Activated T-helper 1 cell treated with anti-CD3 and anti-CD28 coated beads, Interleukin-12 subunit alpha, Interleukin-12 subunit beta, Interleukin-2, Interleukin-4 antibody, amounts not matched to agents 30 ng/mL and 10 ng/mL and 1 ng/mL, durations not matched to agents 14 hours and 24 hours and 36 hours (primary cell): ENCODE measurements at regions of chr6 and their contacts with region 1.

Region 1: DNA sequence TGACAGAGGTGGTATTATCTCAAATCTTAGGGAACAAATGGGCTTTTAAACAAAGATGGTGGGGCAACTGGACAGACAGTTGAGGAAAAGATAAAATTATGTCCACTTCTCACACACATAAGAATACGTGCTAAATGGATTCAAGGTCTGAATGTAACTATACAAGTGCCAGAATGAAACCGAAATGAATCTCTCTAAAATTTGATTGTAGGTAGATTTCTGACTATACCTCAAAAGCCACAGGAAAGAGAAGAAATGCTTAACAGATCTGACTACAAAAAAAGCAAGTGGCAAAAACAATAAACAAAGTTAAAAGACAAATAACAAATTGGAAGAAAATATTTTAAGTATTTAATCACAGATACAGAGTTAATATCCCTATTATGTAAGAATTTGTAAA is 182.7 kb upstream of the OLIG3 start:
- DNase-seq: no peak
- H3K4me3 Mint-ChIP-seq: peak overlapping the region; percentile 20
- H3K27ac Mint-ChIP-seq: peak overlapping the region; percentile 88
- H3K4me1 Mint-ChIP-seq: peaks cover 63% of the 10 kb centered on the region
- H3K27me3 Mint-ChIP-seq: peaks cover 3% of the 10 kb centered on the region

Region 2: DNA sequence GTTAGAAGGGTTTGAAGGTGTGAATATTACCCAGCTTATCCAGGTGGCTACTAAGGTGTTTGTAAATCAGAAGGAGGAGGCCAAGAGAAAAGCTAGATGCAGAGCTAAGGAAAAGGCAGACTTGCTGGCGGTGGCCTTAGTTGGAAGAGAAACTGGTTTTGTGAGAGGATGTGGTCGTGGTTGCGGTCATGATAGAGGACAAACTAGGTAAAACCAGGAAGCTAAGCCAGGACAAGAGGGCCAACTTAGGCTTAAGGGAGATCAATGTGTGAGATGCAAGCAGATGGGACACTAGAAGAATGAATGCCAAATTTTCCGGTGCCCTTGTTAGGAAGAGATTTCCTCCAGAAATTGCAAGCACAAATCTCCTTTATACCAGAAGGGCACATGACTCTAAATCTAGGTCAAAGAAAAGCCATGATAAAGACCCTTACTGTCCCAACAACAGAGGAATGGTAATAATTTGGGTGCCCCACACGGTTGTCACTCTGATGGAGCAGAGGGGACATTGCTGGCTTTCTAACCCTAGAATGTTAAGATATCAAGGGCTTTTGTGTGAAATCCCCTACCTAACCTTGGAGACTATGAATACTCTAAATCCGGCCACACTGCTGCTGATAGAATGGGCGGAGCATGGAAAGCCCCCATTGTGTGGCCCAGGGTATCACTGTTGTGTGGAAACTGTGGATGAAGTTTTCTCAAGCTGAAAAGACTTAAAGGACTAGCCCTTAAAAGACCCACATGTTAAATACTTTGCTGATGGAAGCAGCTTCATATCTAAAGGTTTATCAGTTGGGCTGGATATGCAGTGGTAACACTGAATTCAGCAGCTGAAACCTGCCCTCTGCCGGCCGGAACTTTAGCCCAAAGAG is 511.3 kb before region 1 on chr6:
- intact Hi-C with region 1: loop called (anchors 1 kb)
- DNase-seq: peak; percentile 59
- H3K4me3 Mint-ChIP-seq: peak overlapping the region; percentile 30
- H3K27ac Mint-ChIP-seq: peak overlapping the region; percentile 64
- H3K4me1 Mint-ChIP-seq: peaks cover 59% of the 10 kb centered on the region
- H3K27me3 Mint-ChIP-seq: no peaks in the 10 kb centered on the region

Region 3: DNA sequence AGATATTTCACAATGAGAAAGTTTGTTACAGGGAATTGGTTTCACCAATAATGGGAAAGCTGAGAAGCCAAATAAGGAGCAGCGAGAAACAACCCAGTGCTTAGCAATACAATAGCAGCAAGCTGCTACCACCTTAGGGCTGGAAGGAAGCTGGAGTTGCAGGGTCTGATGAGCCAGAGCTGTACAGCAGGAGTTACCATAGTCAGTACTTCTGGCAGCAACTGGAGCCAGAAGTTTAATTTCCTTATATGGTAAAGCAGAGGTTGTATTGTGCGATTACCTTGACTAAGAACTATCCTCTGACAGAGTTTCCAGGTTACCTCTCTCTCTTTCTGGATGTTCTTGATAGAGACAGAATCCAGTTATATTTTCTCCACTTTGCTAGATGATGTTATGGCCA is 45.6 kb before region 1 on chr6:
- intact Hi-C with region 1: no loop called
- DNase-seq: no peak
- H3K4me3 Mint-ChIP-seq: no peak overlapping the region
- H3K27ac Mint-ChIP-seq: no peak overlapping the region
- H3K4me1 Mint-ChIP-seq: no peaks in the 10 kb centered on the region
- H3K27me3 Mint-ChIP-seq: peaks cover 13% of the 10 kb centered on the region

Region 4: GRCh38 chr6:137697267-137697938 is 20.5 kb after region 1 on chr6:
- intact Hi-C with region 1: loop called (anchors 1 kb)
- DNase-seq: no peak
- H3K4me3 Mint-ChIP-seq: no peak overlapping the region
- H3K27ac Mint-ChIP-seq: no peak overlapping the region
- H3K4me1 Mint-ChIP-seq: peaks cover 62% of the 10 kb centered on the region
- H3K27me3 Mint-ChIP-seq: no peaks in the 10 kb centered on the region

Region 5: DNA sequence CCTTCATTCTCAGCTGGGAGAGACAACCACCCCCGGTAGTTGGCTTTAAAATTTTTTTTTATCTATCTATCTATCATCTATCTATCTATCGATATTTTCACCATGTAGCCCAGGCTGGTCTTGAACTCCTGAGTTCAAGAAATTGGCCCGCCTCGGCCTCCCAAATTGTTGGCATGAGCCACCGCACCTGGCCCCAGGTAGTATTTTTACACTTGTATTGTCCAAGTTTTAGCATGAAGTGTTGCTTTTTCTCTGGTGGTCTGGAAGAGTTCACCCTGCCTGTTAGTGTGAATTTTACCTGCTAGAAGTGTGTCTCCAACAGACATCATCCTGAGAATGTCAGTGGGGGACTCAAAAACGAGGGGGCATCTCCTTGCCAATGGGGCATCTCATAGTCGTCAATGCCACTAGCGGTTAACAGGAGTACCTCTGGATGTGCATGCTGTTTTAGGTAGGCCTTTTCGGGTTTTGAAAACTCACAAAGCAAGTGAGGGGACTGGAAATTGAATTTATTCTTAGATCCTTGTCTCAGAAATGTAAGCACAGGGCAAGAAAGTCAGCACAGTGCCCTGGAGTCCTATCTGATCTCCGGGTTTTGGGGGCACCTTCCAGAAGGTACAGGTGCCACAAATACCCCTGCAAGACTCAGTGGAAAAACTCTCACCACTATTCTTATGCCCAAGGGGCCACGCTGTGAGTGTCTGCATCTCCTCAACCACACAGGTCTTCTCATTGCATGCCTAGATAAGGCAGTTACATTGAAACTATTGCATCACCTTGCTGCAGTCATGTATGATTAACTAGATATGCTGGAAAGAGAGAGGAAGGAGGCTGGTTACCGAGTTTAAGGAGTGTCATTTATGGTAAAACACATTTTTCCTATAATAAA is 227.3 kb after region 1 on chr6:
- intact Hi-C with region 1: loop called (anchors 1 kb)
- DNase-seq: no peak
- H3K4me3 Mint-ChIP-seq: peak overlapping the region; percentile 19
- H3K27ac Mint-ChIP-seq: peak overlapping the region; percentile 97
- H3K4me1 Mint-ChIP-seq: peaks cover 59% of the 10 kb centered on the region
- H3K27me3 Mint-ChIP-seq: no peaks in the 10 kb centered on the region

Region 6: DNA sequence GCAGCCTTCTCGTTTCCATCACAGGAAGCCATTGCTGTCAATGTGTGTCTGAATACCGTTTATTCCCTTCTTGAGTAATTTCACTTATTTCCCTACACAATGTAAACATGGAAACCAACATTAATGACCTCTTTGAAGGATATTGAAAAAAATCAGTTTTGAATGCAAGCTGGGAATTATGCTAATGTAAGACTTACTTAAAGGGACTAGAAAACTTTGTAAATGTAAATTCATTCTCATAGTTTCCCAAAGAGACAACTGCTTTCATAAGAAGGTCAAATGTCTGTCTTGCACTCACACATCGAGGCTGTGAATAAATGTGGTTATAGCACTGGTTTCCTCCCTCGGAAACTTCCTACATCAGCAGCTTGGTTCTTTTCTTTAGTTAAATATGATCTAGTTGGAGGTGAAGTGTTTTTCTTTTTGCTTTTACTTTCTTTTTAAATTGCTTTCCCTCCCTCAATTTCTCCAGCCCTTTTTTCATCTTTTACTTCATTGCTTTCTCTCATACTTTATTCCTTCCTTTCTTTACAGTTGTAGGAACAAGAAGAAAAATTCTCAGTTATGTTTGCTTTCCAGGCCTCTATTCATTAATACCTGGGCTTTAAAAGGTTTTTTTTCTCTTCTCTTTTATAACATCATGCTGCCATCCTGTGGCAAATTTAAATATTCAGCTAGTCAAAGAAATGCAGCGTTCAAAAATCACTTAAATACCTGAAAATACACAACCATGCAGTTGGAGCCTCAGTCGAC is 298.5 kb after region 1 on chr6:
- intact Hi-C with region 1: loop called (anchors 1 kb)
- DNase-seq: peak; percentile 39
- H3K4me3 Mint-ChIP-seq: peak overlapping the region; percentile 69
- H3K27ac Mint-ChIP-seq: peak overlapping the region; percentile 91
- H3K4me1 Mint-ChIP-seq: peaks cover 71% of the 10 kb centered on the region
- H3K27me3 Mint-ChIP-seq: no peaks in the 10 kb centered on the region